CD14-positive monocyte (primary cell): ENCODE measurements at regions of chr10 and their contacts with region 1.

Region 1: GRCh38 chr10:63003816-63004453 is 129.2 kb upstream of the NRBF2 start:
- DNase-seq: no peak
- H3K4me3 ChIP-seq: no peak overlapping the region
- H3K4me3 Mint-ChIP-seq: no peak overlapping the region
- H3K27ac ChIP-seq: no peak overlapping the region
- H3K27ac Mint-ChIP-seq: no peak overlapping the region
- H3K4me1 ChIP-seq: no peaks in the 10 kb centered on the region
- H3K4me1 Mint-ChIP-seq: no peaks in the 10 kb centered on the region
- H3K27me3 ChIP-seq: peaks cover 3 to 5% of the 10 kb centered on the region in 2 donors
- H3K27me3 Mint-ChIP-seq: peaks cover 5 to 14% (median 8%) of the 10 kb centered on the region in 3 donors
- CTCF ChIP-seq: peak; percentile 57

Region 2: DNA sequence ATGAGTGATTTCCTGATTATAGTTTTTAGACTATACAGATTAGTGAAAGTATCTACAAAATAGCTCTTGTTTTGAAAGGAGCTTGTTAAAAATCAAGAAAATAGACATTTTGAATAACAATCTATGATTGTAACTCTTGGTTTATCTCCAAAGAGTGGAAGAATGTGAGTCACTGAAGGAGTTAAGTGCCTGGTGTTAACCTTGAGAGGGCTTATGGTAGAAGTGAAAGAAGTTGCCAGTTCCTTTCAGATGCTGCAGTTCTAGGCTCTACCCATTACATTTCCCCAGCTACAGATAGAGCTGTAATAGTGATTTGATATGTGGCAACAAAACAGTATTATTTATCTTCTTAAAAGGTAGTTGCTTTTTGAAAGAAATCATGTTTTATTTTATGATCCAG is 141.8 kb after region 1 on chr10:
- intact Hi-C with region 1: loop called in 1 of 2 experiments (anchors 10 kb)
- DNase-seq: no peak
- H3K4me3 ChIP-seq: no peak overlapping the region
- H3K4me3 Mint-ChIP-seq: no peak overlapping the region
- H3K27ac ChIP-seq: peak overlapping the region in 1 of 2 donors; percentile 38
- H3K27ac Mint-ChIP-seq: peak overlapping the region in 1 of 7 donors; percentile 76
- H3K4me1 ChIP-seq: peaks cover 18 to 19% of the 10 kb centered on the region in 2 donors
- H3K4me1 Mint-ChIP-seq: peaks cover 35% of the 10 kb centered on the region
- H3K27me3 ChIP-seq: no peaks in the 10 kb centered on the region
- H3K27me3 Mint-ChIP-seq: no peaks in the 10 kb centered on the region
- CTCF ChIP-seq: no peak

Region 3: DNA sequence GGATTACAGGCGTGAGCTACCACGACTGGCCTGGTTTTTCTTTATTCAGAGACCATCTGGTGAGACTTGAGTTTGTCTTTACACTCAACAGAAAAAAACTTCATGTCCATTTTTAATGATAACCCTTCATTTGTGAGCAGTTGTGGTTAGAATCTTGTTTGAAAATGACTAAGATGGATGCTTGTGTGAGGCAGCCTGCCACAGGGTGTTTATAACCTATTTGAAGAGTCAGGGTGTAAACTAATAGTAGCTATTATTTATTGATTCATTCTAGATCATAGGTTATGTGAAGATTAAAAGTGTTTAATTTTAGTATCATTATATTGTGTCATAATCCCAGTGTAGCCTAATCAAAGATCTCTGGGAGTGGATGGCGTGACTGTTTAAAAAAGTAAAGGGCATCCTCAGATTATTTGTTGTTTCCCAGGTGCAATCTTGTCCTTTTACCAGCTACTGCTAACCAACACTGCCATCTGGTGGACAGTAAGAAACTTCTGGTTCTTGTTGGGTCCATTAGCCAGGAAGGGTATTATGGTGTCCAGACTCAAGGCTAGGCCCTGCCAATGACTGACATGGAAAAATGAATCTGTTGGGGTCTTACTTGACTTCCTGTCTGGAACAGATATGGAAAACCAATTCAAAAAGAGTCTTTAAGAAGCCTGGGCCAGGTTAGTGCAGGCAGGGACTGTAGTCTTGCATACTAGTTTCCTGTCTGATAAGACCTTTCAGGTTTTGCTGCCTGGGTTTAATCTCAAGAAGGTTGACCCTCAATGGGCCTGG is 154.1 kb after region 1 on chr10:
- intact Hi-C with region 1: loop called in 1 of 2 experiments (anchors 5 kb)
- DNase-seq: peak; percentile 65 to 81 (median 70)
- H3K4me3 ChIP-seq: no peak overlapping the region
- H3K4me3 Mint-ChIP-seq: no peak overlapping the region
- H3K27ac ChIP-seq: no peak overlapping the region
- H3K27ac Mint-ChIP-seq: peak overlapping the region in 1 of 7 donors; percentile 20
- H3K4me1 ChIP-seq: peaks cover 18 to 24% of the 10 kb centered on the region in 2 donors
- H3K4me1 Mint-ChIP-seq: peaks cover 20% of the 10 kb centered on the region
- H3K27me3 ChIP-seq: no peaks in the 10 kb centered on the region
- H3K27me3 Mint-ChIP-seq: peaks cover 0 to 2% (median 0%) of the 10 kb centered on the region in 3 donors
- CTCF ChIP-seq: peak; percentile 91